Activated CD8-positive, alpha-beta T cell treated with anti-CD3 and anti-CD28 coated beads, Interleukin-2, amount 10 ng/mL, durations not matched to agents 7 days and 5 days (primary cell): ENCODE measurements at regions of chr17 and their contacts with region 1.

Region 1: DNA sequence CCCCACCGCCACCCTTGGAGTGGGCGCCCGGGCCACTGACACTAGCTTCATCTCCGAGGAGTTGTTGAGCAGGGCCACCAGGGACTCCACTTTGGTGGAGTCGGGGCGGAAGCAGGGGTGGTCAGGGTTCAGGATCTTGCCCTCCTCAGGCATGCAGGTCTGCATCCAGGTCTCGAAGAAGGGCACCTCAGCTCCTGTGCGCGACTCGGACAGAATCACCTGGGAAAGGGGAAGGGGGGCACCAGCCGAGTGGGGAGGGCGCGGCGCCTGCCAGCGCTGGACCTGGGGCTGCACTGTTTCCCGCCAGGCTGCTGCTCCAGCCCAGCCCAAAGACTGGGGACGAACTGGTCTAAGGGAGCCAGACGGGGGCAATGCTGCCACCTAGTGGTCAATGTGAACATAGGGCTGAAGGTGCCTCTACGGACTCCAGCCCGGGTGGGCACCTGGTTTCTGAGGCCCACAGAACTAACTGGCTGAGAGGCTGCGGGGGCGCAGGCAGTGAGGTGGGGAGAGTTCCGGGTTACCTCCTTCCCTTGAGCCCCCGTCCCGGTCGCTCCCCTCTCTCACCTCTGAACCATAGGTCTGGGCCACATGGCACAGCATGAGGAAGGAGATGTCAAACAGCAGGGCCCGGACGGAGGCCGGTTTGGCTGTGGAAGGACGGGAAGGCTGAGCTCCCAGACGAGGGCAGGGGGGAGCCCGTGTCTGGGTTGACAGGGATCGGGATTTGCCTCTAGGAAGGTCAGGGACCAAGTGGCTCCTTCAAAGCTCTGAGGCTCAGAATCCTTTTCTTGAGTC is 11.8 kb downstream of the CSF3 start:
- DNase-seq: peak; percentile 85
- ATAC-seq: peak; percentile 91
- H3K4me3 Mint-ChIP-seq: no peak overlapping the region
- H3K27ac Mint-ChIP-seq: no peak overlapping the region
- H3K4me1 Mint-ChIP-seq: peaks cover 23% of the 10 kb centered on the region
- H3K27me3 Mint-ChIP-seq: no peaks in the 10 kb centered on the region

Region 2: DNA sequence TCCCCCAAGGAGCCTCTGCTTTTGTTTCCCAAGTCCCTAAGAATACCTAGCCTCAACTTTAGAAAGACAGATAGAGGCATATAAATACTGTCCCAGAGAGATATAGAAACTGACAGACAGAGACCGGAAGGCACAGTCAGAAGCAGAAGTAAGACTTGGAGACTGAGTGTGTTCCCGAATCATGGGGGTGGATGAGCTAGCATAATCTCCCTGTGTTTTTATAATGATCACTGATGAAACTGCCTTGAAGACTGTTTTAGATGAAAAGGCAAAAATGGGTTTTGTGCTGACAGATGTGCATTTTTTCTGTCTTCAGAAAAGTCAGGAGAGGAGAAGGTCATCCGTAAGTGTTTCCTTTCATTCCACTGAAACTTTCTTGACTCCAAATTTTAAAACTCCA is 54.7 kb before region 1 on chr17:
- CTCF ChIA-PET with region 1: no interaction called
- POLR2A ChIA-PET with region 1: no interaction called
- DNase-seq: no peak
- ATAC-seq: no peak
- H3K4me3 Mint-ChIP-seq: no peak overlapping the region
- H3K27ac Mint-ChIP-seq: no peak overlapping the region
- H3K4me1 Mint-ChIP-seq: no peaks in the 10 kb centered on the region
- H3K27me3 Mint-ChIP-seq: peaks cover 23% of the 10 kb centered on the region

Region 3: DNA sequence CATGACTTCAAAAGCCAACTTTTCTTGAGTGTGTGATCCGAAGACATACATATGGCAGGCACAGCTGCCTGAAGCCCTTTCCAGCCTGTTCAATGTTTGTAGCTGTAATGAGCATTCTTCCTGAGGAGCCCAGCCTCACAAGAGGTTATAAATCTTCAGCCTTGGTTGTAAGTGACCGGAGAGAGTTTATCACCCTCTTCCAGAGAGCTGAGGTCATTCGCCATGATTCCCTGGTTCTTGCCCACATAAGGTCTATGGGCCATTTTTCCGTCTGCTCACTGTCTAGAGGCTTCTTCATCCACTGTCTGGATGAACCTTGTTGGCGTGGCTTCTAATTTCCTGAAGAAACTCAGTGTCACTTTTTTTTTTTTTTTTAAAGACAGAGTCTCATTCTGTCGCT is 21.5 kb before region 1 on chr17:
- CTCF ChIA-PET with region 1: interaction called, 110 read pairs
- POLR2A ChIA-PET with region 1: no interaction called
- DNase-seq: no peak
- ATAC-seq: no peak
- H3K4me3 Mint-ChIP-seq: no peak overlapping the region
- H3K27ac Mint-ChIP-seq: no peak overlapping the region
- H3K4me1 Mint-ChIP-seq: peaks cover 8% of the 10 kb centered on the region
- H3K27me3 Mint-ChIP-seq: peaks cover 3% of the 10 kb centered on the region